Ovary (tissue), 10 donors: ENCODE measurements at regions of chr16 and their contacts with region 1.

Region 1: DNA sequence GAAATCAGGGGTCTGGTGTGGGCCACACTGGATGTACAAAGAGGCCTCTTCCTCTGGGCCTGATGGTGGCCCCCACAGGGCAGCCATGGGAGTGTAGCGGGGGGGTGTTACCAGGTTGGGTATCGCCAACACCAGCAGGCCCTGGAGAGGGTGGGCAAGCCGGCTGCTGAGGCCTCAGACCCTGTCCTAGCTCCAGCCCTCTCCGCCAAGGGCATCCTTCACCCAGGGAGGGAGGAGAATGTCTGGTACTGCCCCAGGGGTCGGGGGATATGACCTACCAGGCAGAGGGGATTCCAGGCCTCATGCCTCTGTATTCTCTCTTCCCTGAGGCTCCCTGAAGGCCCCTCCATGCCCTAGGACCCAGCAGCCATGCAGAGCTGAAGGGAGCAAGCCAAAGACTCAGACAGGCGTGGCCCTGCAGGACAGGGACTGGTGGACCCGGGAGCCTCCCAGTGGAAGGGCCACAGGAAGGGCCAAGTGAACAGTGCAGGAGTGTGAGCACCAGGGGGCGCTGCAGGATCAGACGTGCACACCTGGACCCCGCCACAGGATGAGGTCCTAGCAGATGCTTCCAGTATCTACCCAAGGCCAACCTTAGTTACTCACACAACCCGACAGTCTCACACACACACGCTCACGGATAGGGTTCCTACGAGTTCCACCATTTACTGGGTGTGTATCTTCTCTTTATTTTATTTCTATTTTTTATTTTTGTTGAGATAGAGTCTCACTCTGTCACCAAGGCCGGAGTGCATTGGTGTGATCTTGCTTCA is 10.9 kb upstream of the CES4A start:
- DNase-seq: peak; percentile 87 to 95 (median 93)
- H3K4me3 ChIP-seq: no peak overlapping the region
- H3K27ac ChIP-seq: no peak overlapping the region
- H3K4me1 ChIP-seq: no peaks in the 10 kb centered on the region
- H3K27me3 ChIP-seq: no peaks in the 10 kb centered on the region
- CTCF ChIP-seq: peak; percentile 75 to 99 (median 97)
- EP300 ChIP-seq: no peak
- POLR2A ChIP-seq: peak; percentile 34

Region 2: DNA sequence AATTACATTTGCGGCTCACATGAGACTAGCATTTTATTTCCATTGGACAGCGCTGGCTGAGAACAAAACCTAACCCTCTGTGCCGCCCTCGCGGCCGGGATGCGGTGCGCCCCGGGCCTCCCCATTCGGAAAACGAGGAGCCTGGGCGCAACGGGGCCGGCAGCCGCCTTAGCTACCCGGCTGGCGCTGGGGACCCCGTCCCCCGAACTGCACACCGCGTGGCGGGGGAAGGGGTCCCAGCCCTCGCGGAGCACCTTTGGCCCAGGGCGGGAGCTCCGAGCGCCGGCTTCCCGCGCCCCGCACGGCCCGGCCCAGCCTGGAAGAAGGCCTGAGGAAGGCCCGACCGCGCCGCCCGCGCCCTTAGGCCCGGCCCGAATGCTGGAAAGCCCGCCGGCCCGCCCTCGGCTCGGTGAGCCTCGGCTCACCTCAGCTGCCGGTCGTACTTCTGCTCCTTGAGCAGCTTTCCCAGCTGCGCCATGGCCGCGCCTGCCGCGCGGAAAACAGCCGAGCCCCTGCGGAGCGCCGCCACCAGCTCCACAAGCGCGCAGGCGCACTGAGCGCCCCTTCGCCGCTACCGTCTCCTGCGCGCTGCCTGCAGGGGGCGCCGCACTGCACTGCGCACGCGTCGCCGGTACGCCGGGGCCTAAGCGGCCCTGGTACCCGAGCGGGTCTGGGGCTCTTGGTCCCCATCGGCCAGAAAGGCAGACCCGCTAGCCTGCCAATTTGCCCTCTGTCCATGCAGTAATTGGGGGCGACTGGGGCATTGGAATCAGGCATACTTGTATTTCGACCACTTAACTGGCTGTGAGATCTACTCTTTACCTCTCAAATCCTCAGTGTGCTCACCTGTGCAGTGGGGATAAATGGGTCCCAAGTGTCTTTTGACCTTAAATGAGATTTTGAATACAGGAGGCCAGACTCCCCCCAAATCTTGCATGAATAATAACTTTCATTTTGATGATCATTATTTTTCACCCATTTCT is 146.8 kb before region 1 on chr16 and contains the start of gene NAE1:
- intact Hi-C with region 1: no loop called
- DNase-seq: peak; percentile 82 to 94 (median 87)
- H3K4me3 ChIP-seq: peak within 1 kb of the TSS; percentile 90
- H3K27ac ChIP-seq: peak within 1 kb of the TSS; percentile 82 to 84
- H3K4me1 ChIP-seq: peaks cover 5% of the 10 kb centered on the region
- H3K27me3 ChIP-seq: no peaks in the 10 kb centered on the region
- CTCF ChIP-seq: peak; percentile 94 to 98 (median 97)
- EP300 ChIP-seq: no peak
- POLR2A ChIP-seq: peak; percentile 88
- total RNA-seq, gene NAE1: 38.3 to 63.7 (median 54.0) TPM

Region 3: DNA sequence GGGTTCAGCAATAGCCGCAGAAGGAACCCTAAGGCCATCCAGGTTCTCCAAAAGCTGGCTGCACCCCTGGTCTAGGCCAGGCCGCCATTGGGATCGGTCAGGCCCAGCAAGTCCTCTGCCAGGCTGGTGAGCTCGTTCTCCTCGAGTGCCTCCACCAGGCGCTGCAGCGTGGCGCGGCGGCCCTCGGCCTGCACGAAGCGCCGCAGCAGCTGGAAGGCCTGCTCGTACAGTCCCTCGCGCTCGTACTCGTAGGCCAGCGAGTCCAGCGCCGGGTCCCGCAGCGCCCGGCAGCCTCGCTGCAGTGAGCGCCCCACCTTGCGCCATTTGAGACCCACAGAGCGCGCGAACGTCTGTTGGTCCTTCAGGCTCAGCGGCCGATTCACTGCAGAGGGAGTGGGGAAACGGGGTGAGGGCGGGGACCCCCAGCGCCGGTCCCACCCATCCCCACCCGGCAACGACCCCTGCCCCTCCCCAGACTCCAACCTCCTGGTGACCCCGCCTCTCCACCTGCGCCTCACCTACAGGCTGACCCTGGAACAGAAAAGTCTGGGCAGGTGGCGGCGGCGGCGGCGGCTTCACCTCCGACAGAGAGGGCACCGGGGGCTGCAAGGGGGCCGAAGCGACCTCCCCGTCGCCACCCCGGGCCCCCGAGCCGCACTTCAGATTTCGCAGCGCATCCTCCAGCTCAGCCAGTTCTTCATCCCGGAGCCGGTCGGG is 177.2 kb after region 1 on chr16:
- intact Hi-C with region 1: loop called (anchors 1 to 2 kb)
- DNase-seq: no peak
- H3K4me3 ChIP-seq: no peak overlapping the region
- H3K27ac ChIP-seq: no peak overlapping the region
- H3K4me1 ChIP-seq: peaks cover 5% of the 10 kb centered on the region
- H3K27me3 ChIP-seq: no peaks in the 10 kb centered on the region
- CTCF ChIP-seq: no peak
- EP300 ChIP-seq: no peak
- POLR2A ChIP-seq: no peak

Region 4: GRCh38 chr16:67183627-67184328 is 206.3 kb after region 1 on chr16 and contains the start of gene MATCAP1:
- intact Hi-C with region 1: loop called in 1 of 4 experiments (anchors 10 kb)
- DNase-seq: peak; percentile 96 to 99 (median 98)
- H3K4me3 ChIP-seq: peak within 1 kb of the TSS; percentile 83
- H3K27ac ChIP-seq: peak within 1 kb of the TSS; percentile 97 to 99
- H3K4me1 ChIP-seq: peaks cover 3% of the 10 kb centered on the region
- H3K27me3 ChIP-seq: no peaks in the 10 kb centered on the region
- CTCF ChIP-seq: no peak
- EP300 ChIP-seq: peak; percentile 92
- POLR2A ChIP-seq: peak; percentile 88
- total RNA-seq, gene MATCAP1: 16.8 to 96.4 (median 65.7) TPM